Psoas muscle (tissue), 8 donors: ENCODE measurements at regions of chr1 and their contacts with region 1.

Region 1: GRCh38 chr1:170929835-170930554 is 5.3 kb upstream of the MROH9 start:
- DNase-seq: no peak
- ATAC-seq: peak; percentile 56 to 90 (median 84)
- H3K4me3 ChIP-seq: no peak overlapping the region
- H3K27ac ChIP-seq: no peak overlapping the region
- H3K4me1 ChIP-seq: no peaks in the 10 kb centered on the region
- H3K27me3 ChIP-seq: no peaks in the 10 kb centered on the region
- CTCF ChIP-seq: peak; percentile 77

Region 2: DNA sequence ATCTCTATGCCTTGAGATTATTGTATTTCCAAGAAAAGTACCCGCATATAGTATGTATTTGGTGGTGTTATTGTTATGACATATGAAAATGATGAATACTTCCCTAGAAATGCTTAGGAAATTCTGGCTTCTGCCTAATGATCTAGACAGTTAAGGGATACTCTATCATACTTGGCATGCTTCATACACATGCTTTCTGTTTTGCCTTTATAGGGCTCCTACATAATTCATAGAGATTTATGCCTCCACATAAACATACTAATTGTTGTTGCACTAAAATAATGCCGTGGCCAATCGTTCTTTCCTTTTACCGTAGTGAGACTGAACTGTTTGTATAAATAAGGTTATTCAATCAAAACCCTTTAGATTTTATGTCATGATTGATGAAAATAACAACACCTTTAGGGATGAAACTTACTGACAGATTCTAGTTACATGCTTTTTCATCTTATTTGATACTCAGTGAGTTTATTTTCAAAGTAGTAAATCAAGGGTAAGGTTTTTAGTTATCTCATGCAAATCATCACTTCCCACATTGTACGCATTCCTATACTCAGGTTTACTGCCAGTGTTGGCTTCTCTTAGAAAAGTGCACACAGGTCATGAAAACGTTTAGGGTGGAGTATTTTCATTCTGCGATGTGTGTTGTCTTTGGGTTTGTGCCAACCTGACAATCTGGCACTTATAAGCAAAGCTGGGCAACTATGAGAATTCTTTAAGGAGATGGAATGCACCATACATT is 995.8 kb before region 1 on chr1:
- intact Hi-C with region 1: loop called in 1 of 2 experiments (anchors 5 kb)
- DNase-seq: no peak
- ATAC-seq: no peak
- H3K4me3 ChIP-seq: no peak overlapping the region
- H3K27ac ChIP-seq: no peak overlapping the region
- H3K4me1 ChIP-seq: no peaks in the 10 kb centered on the region
- H3K27me3 ChIP-seq: no peaks in the 10 kb centered on the region
- CTCF ChIP-seq: no peak

Region 3: GRCh38 chr1:170836141-170836540 is 93.9 kb before region 1 on chr1:
- intact Hi-C with region 1: no loop called
- DNase-seq: no peak
- ATAC-seq: no peak
- H3K4me3 ChIP-seq: no peak overlapping the region
- H3K27ac ChIP-seq: no peak overlapping the region
- H3K4me1 ChIP-seq: no peaks in the 10 kb centered on the region
- H3K27me3 ChIP-seq: no peaks in the 10 kb centered on the region
- CTCF ChIP-seq: no peak

Region 4: DNA sequence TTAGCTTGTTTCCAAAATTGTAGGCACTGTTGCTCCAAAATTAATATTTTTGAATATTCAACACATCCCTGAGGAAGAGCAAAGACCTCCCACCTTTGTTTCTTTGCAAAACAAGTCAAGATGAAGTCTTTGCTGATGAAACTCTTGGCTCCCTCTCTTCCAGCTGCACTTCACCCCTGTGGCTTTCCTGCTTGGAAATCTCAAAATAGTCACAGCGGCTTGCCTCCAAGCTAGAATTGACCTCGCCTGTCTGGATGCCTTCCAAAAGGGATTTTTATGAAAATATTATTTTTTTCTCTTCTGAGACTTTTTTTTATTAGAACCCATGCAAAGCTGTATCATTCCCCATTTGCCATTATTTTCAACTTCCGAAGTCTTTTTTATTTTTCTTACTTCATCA is 65.8 kb before region 1 on chr1:
- intact Hi-C with region 1: no loop called
- DNase-seq: no peak
- ATAC-seq: peak in 1 of 4 donors; percentile 59
- H3K4me3 ChIP-seq: no peak overlapping the region
- H3K27ac ChIP-seq: no peak overlapping the region
- H3K4me1 ChIP-seq: no peaks in the 10 kb centered on the region
- H3K27me3 ChIP-seq: no peaks in the 10 kb centered on the region
- CTCF ChIP-seq: no peak